Spleen (tissue), 13 donors: ENCODE measurements at regions of chr5 and their contacts with region 1.

Region 1: DNA sequence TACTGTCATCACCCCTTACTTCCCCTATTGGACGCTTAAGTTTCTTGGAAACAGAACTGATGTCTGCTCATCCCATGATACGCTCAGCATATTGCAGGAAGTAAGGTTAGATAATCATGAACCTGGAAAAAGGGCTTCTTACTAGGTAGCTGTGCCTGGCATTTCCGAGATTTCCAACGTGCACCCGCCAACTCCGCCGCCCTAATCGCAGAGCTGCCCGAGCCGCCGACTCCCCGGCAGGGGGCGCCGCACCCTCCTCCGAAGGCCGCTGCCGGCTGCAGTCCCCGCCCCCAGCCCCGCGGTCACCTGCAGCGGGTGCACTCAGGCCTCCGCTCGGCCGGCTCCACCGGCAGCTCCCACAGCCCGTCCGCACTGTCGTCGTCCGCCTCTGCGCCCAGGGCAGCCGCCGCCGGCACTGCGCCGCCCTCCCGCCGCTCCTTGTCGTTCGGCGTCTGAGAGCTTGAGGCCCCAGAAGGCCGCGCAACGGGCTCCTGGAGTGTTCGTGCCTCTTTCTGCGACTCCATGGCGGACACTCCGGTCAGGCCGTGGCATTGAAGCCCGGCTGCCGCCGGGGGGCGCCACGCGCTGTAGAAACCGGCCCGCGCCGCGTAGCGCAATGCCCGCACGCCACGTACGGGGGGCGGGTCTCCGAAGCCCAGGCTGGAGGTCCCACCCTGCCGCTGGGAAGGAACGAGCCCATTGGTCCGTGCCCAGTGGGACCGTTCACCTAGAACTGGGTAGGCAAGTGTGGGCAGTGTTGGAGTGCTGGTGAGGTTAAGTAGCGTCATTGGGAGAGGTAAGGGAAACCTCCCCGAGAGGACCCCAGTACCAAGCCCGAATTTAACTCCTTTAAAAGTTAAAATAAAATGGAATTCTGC is at the start of gene DTWD2:
- DNase-seq: peak; percentile 99
- H3K4me3 ChIP-seq: peak within 1 kb of the TSS; percentile 66 to 84 (median 78)
- H3K27ac ChIP-seq: peak within 1 kb of the TSS; percentile 90 to 95 (median 94)
- H3K4me1 ChIP-seq: peaks cover 5 to 37% (median 16%) of the 10 kb centered on the region in 6 donors
- H3K27me3 ChIP-seq: no peaks in the 10 kb centered on the region
- CTCF ChIP-seq: peak; percentile 89 to 98 (median 97)
- POLR2A ChIP-seq: peak in 1 of 3 donors; percentile 69
- total RNA-seq, gene DTWD2: 7.2 to 25.5 (median 9.6) TPM

Region 2: DNA sequence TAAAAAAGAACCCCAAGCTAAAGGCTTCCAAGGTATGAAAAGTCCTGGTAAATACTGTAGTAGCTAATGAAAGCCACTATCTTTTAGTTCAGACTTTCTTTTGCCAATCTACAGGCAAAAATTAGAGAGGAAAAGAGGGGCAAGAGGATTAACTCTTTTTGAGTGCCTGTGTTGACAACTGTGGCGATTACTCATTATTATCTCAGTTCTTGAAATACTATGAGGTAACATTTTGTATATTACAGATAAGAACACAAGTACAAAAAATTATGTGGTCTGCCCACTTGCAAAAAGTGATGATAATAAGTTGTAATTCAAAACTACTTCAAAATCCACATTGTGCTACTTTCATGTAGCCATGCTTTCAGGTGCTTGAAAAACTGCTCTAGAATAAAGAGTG is 143.9 kb before region 1 on chr5:
- intact Hi-C with region 1: no loop called
- DNase-seq: no peak
- H3K4me3 ChIP-seq: no peak overlapping the region
- H3K27ac ChIP-seq: no peak overlapping the region
- H3K4me1 ChIP-seq: no peaks in the 10 kb centered on the region
- H3K27me3 ChIP-seq: no peaks in the 10 kb centered on the region
- CTCF ChIP-seq: no peak
- POLR2A ChIP-seq: no peak

Region 3: GRCh38 chr5:119105971-119106370 is 117.7 kb after region 1 on chr5:
- intact Hi-C with region 1: no loop called
- DNase-seq: no peak
- H3K4me3 ChIP-seq: no peak overlapping the region
- H3K27ac ChIP-seq: no peak overlapping the region
- H3K4me1 ChIP-seq: no peaks in the 10 kb centered on the region
- H3K27me3 ChIP-seq: no peaks in the 10 kb centered on the region
- CTCF ChIP-seq: no peak
- POLR2A ChIP-seq: no peak

Region 4: DNA sequence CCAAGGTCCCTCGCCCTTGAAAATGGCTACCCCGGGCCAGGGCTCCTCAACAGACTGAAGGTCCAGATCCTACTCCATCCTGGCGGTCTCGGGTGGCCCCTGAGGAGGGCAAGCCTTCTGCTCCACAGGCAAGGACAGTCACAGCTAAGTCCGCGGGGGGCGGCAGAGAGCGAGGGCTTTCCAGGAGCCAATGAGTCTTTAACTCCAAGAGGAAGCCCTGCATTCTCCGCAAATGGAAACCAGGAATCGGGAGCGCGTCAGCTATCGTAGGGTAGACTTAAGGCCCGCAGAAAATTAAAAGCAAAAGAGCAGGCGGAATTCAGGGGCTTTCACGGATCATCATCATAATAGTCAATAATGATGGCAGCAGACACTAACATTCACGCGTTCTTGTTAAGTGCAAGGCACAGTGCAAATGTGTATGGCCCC is 279.7 kb after region 1 on chr5:
- intact Hi-C with region 1: loop called (anchors 10 kb)
- DNase-seq: peak; percentile 96
- H3K4me3 ChIP-seq: peak overlapping the region; percentile 64 to 97 (median 86)
- H3K27ac ChIP-seq: peak overlapping the region; percentile 89 to 98 (median 96)
- H3K4me1 ChIP-seq: peaks cover 15 to 52% (median 41%) of the 10 kb centered on the region in 6 donors
- H3K27me3 ChIP-seq: no peaks in the 10 kb centered on the region
- CTCF ChIP-seq: peak in 8 of 11 experiments; percentile 23 to 69 (median 34)
- POLR2A ChIP-seq: no peak